IMR-90 (cell line): ENCODE measurements at regions of chr19 and their contacts with region 1.

Region 1: GRCh38 chr19:51338563-51339312 is 3.2 kb downstream of the VSIG10L start:
- DNase-seq: peak; percentile 61
- ATAC-seq: peak; percentile 74
- H3K4me3 ChIP-seq: peak overlapping the region; percentile 55
- H3K27ac ChIP-seq: no peak overlapping the region
- H3K4me1 ChIP-seq: no peaks in the 10 kb centered on the region
- H3K27me3 ChIP-seq: no peaks in the 10 kb centered on the region
- CTCF ChIP-seq: peak; percentile 80
- POLR2A ChIP-seq: no peak
- RAD21 ChIP-seq: peak; percentile 73

Region 2: GRCh38 chr19:51367565-51368365 is 29.0 kb after region 1 on chr19:
- CTCF ChIA-PET with region 1: no interaction called
- POLR2A ChIA-PET with region 1: interaction called, 4 read pairs
- dilution Hi-C with region 1: no loop called
- in situ Hi-C with region 1: no loop called
- intact Hi-C with region 1: loop called (anchors 1 kb)
- DNase-seq: peak; percentile 98
- ATAC-seq: peak; percentile 90
- H3K4me3 ChIP-seq: peak overlapping the region; percentile 84
- H3K27ac ChIP-seq: peak overlapping the region; percentile 97
- H3K4me1 ChIP-seq: peaks cover 14% of the 10 kb centered on the region
- H3K27me3 ChIP-seq: no peaks in the 10 kb centered on the region; the same call in 1 of the 2 replicates
- CTCF ChIP-seq: no peak
- POLR2A ChIP-seq: peak; percentile 57; the same call in 1 of the 2 replicates
- RAD21 ChIP-seq: no peak

Region 3: GRCh38 chr19:51422053-51422448 is 83.3 kb after region 1 on chr19:
- CTCF ChIA-PET with region 1: no interaction called
- POLR2A ChIA-PET with region 1: no interaction called
- dilution Hi-C with region 1: no loop called
- in situ Hi-C with region 1: no loop called
- intact Hi-C with region 1: loop called (anchors 5 kb)
- DNase-seq: peak; percentile 59
- ATAC-seq: peak; percentile 100
- H3K4me3 ChIP-seq: no peak overlapping the region
- H3K27ac ChIP-seq: no peak overlapping the region
- H3K4me1 ChIP-seq: no peaks in the 10 kb centered on the region
- H3K27me3 ChIP-seq: no peaks in the 10 kb centered on the region
- CTCF ChIP-seq: peak; percentile 94
- POLR2A ChIP-seq: no peak
- RAD21 ChIP-seq: peak; percentile 76

Region 4: GRCh38 chr19:51514866-51515481 is 176.2 kb after region 1 on chr19:
- CTCF ChIA-PET with region 1: no interaction called
- POLR2A ChIA-PET with region 1: no interaction called
- dilution Hi-C with region 1: no loop called
- in situ Hi-C with region 1: no loop called
- intact Hi-C with region 1: loop called (anchors 2 kb)
- DNase-seq: peak; percentile 48
- ATAC-seq: peak; percentile 80
- H3K4me3 ChIP-seq: no peak overlapping the region
- H3K27ac ChIP-seq: no peak overlapping the region
- H3K4me1 ChIP-seq: no peaks in the 10 kb centered on the region
- H3K27me3 ChIP-seq: no peaks in the 10 kb centered on the region
- CTCF ChIP-seq: peak; percentile 59
- POLR2A ChIP-seq: no peak
- RAD21 ChIP-seq: peak; percentile 47

Region 5: DNA sequence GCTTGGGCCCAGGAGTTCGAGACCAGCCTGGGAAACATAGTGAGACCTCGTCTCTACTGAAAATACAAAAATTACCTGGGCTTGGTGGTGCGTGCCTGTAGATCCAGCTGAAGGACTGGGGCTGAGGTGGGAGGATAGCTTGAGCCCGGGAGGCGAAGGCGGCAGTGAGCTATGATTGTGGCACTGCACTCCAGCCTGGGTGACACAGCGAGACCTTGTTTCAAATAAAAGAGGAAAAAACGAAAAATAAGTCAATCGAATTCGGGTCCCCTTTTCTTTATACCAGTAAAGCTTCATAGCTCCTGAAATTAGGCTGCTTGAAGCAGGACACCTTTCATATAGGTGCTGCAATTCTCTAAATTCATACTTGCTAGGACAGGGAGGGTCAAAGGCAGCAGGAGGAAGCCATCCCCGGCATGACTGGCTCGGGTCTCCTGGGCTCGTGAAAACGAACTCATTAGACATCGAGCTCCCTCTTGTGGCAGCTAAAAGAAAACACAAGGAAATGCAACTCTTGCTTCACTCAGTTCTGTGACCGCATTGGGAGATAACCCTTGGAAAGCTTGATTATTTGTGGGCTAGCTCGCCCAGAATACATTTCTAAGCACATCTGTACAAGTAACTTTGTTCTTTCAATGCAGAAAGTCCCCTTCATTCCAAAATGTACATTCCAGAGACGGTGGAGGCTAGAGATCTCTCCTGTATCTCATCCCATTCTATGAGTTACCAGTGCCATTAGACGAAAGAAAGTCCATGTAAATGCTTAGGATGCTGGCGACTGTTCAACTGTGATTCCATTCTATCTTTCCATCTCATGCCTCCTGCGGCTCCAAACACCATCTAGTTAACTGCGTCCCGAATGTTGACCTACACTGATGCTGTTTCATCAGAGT is 439.1 kb after region 1 on chr19:
- CTCF ChIA-PET with region 1: interaction called, 3 read pairs
- POLR2A ChIA-PET with region 1: no interaction called
- dilution Hi-C with region 1: no loop called
- in situ Hi-C with region 1: no loop called
- intact Hi-C with region 1: loop called (anchors 5 kb)
- DNase-seq: peak; percentile 80
- ATAC-seq: peak; percentile 99
- H3K4me3 ChIP-seq: no peak overlapping the region
- H3K27ac ChIP-seq: no peak overlapping the region
- H3K4me1 ChIP-seq: no peaks in the 10 kb centered on the region
- H3K27me3 ChIP-seq: peaks cover 2% of the 10 kb centered on the region; the same call in 1 of the 2 replicates
- CTCF ChIP-seq: peak; percentile 82
- POLR2A ChIP-seq: no peak
- RAD21 ChIP-seq: peak; percentile 79